ENCODE measurements at regions of chr4 and their contacts with region 1.

Region 1: DNA sequence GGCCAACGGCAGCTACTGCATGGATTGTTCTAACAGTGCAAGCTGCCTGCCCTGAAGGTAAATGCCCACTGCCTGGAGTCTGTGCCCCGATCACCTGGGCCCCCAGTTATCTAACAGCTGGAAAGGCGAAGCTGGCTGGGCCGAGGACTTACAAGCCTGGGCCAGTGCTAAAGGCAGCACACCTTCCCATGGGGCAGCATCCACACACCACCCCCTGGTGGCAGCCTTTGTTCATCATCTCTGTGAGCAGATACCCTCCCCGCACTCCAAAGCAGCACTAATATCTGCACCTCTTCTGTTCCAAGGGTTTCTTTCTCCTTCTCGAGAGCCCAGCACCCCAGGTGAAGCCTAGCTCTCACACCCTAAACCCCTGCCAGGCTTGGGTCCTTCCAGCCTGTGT is 7.6 kb downstream of the SLC2A9 start:
- DNase-seq: peak in 4 of 6 donors; percentile 40 to 80 (median 63)
- ATAC-seq: peak; percentile 68 to 84 (median 80)
- H3K4me3 ChIP-seq: no peak overlapping the region
- H3K27ac ChIP-seq: no peak overlapping the region
- H3K4me1 ChIP-seq: no peaks in the 10 kb centered on the region
- H3K27me3 ChIP-seq: no peaks in the 10 kb centered on the region
- CTCF ChIP-seq: peak; percentile 26 to 50 (median 31)

Region 2: DNA sequence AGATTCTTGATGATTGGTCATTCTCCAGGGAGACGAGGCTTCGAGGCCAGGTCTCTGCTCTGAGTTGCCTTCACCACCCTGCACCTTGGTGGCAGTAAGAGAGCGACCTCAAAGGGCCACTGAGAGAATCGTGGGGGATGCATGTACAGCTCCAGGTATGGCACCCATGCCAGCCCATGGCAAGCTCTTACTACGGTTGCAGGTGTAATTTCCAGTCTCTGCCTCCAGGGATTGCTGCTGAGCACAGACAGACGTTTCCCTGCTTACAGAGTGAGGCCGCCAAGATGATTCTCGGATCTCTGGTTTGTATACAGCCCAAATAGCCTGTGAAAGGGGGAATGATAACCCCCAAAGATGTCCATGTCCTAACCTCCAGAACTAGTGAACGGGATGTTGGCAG is 248.6 kb before region 1 on chr4:
- intact Hi-C with region 1: loop called in 2 of 3 experiments (anchors 5 kb)
- DNase-seq: no peak
- ATAC-seq: no peak
- H3K4me3 ChIP-seq: no peak overlapping the region
- H3K27ac ChIP-seq: no peak overlapping the region
- H3K4me1 ChIP-seq: no peaks in the 10 kb centered on the region
- H3K27me3 ChIP-seq: no peaks in the 10 kb centered on the region
- CTCF ChIP-seq: peak in 1 of 4 donors; percentile 14

Measured in pancreas (tissue), 10 donors.